A673 (cell line): ENCODE measurements at regions of chr7 and their contacts with region 1.

Region 1: DNA sequence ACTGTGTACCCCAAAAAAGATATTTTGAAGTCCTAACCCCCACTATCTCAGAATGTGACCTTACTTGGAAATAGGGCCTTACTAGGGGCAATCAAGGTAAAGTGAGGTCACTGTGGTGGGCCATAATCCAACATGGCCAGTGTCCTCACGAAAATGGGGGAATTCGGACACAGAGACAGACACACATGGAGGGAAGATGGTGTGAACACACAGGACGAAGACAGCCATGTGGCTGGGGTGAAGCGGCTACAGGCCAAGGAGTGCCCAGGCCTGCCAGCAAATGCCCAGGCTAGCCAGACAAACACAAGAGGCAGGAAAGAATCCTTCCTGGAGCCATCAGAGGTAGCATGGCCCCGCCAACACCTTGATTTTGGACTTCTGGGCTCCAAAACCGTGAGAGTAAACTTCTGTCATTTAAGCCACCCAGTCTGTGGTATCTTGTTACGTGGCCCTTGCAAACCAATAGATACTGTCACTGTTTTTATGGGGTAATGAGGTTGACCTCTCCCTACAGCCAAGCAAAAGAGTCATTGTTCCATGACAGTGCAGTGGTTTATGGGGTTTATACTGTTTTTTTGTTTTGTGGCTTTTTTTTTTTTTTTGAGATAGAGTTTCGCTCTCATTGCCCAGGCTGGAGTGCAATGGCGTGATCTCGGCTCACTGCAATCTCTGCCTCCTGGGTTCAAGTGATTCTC is 32.9 kb downstream of the KIAA1549 start:
- DNase-seq: no peak
- H3K4me3 ChIP-seq: no peak overlapping the region
- H3K27ac ChIP-seq: no peak overlapping the region
- H3K4me1 ChIP-seq: no peaks in the 10 kb centered on the region
- H3K27me3 ChIP-seq: no peaks in the 10 kb centered on the region
- CTCF ChIP-seq: no peak

Region 2: DNA sequence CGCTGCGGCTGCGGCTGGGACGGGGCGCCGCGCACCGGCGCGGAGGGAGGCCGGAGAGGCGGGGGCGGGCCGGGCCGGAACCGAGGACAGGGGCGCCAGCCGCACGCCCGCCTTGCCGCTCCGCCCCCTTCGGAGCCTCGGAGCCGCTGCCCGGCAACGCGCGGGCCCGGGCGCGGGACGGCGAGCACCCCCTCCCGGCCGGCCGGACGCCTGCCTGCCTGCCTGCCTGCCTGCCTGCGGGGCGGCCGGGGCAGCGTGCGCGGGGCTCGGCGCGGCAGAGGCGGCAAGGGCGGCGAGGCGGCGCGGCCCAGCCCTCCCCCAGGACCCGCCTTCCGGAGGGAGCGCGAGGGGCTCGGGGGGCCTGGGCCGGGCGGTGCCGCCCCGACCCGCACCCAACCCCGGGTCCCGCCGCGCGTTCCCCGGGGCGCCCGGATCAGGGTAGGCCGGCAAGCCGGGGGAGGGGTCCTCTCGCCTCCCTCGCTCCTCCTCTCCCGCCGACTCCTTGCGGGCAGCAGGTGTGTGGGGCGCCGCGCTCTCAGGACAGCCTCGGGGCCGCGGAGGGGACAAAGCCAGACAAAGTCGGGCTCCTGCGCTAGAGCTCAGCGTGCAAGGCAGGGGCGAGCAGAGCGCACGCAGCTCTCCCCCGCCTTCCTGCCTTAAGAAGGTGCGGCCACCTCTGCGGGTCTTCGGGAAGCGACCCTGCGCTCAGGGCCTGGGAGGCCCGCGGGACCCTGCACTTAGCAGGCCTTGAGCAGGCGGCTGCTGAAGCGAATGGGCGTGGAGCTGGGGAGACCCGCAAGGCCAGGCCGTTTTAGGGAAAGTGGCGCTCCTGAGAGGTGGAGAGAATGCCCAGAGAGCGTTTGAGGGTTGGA is 33.3 kb after region 1 on chr7 and contains the start of gene KIAA1549:
- CTCF ChIA-PET with region 1: interaction called, 10 read pairs
- POLR2A ChIA-PET with region 1: no interaction called
- intact Hi-C with region 1: no loop called
- DNase-seq: peak; percentile 75
- H3K4me3 ChIP-seq: peak within 1 kb of the TSS; percentile 56
- H3K27ac ChIP-seq: no peak within 1 kb of the TSS
- H3K4me1 ChIP-seq: peaks cover 6% of the 10 kb centered on the region
- H3K27me3 ChIP-seq: peaks cover 28% of the 10 kb centered on the region
- CTCF ChIP-seq: no peak
- total RNA-seq, gene KIAA1549: 2.5 and 4.2 TPM in 2 replicates